ENCODE measurements at regions of chr1 and their contacts with region 1.

Region 1: GRCh38 chr1:23979878-23980724 is at the start of gene SRSF10:
- DNase-seq: peak; percentile 95

Region 2: GRCh38 chr1:23867953-23868556 is 112.0 kb before region 1 on chr1 and contains the start of gene FUCA1:
- CTCF ChIA-PET with region 1: no interaction called
- POLR2A ChIA-PET with region 1: no interaction called
- DNase-seq: peak; percentile 97

Region 3: GRCh38 chr1:23959041-23959460 is 21.1 kb before region 1 on chr1:
- CTCF ChIA-PET with region 1: no interaction called
- POLR2A ChIA-PET with region 1: interaction called, 14 read pairs
- DNase-seq: peak; percentile 76

Region 4: DNA sequence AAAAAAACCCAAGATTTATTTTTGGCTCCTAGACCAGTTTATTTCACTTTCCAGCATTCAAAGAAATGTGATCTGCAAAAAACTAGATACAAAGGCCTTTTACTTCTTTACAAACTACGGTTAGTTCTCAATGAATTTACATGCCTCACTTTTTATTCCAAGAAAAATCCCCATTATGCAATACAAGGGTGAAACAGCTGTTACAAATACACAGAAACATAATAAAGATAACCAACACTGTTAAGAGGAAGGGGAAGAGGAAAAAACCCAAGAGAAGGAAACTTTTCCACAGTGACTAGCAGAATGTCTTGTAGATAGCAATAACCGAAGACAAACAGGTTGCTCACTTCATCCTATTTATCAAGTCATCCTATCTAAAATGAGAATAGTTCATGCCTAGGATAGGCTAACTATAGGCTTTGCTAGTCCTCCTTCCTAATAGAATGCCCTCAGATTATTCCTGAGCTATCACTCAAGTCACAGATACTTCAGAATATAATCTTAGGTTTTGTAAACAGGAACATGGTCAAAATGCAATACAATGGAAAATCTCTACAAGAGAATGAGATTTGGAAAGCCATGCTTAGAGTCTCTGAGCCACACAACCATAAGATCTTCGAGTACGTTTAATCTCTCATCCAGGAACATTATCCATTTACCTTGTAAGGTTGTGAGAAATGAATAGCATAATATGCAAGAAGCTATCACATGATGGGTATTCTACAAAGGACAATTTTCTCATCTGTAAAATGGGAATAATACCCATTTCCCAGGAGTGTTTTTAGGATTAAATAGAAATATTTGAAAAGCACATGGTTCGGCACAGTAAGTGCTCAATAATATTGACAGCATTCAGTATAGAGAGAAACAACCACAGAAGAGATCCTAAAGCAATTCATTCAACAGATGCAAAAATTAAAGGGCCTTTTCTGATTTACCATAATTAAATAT is 15.0 kb before region 1 on chr1:
- CTCF ChIA-PET with region 1: no interaction called
- POLR2A ChIA-PET with region 1: interaction called, 14 read pairs
- DNase-seq: no peak

Region 5: DNA sequence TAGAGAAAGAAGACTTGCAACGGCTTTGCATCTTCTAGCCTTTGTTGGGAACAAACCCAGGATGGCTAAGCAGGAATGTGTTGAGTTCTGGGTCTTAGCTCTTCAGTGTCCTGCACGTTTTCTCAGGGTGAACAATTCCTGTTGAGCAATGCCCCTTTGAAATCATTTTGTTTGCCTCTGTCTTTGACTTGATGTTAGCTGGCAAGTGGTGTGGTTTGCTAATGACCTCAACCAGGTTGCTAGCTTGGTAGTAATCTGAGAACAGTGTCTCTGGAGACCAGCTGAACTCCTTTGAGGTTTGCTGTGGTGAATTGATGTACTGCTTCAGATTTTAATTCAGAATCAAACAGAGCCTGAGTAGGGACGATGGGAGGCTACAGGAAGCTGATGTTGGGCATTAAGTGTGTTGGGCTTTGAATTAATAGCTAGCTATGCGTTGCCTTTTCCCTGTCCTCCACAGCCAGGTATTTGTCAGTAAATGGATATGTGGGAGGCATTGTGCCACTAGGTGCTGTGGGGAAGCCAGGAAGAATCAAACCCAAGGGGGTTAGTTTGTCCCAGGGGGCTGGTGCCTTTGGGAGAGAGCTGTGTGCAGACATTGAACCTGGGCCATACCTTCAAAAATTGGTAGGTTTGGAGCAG is 23.4 kb after region 1 on chr1:
- CTCF ChIA-PET with region 1: interaction called, 3 read pairs
- POLR2A ChIA-PET with region 1: interaction called, 22 read pairs
- DNase-seq: no peak

Region 6: DNA sequence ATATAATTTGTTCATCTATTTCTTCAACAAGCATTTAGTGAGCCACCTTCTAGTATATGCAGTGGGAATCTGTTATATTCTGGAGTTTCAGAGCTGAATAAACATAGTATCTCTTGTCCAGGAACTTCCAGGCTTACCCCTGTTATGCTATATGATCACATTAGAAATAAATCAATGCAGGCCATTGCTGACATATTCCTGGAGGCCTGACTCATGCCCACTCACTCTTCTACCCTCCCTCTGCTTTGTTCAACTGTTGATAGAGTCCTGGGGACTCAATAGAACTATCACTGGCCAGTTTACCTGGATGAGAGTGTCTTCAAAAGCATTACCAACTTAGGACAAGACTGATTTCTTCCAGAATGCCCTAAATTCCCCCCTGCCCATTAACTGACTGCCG is 29.3 kb after region 1 on chr1:
- CTCF ChIA-PET with region 1: interaction called, 3 read pairs
- POLR2A ChIA-PET with region 1: interaction called, 22 read pairs
- DNase-seq: no peak

Region 7: DNA sequence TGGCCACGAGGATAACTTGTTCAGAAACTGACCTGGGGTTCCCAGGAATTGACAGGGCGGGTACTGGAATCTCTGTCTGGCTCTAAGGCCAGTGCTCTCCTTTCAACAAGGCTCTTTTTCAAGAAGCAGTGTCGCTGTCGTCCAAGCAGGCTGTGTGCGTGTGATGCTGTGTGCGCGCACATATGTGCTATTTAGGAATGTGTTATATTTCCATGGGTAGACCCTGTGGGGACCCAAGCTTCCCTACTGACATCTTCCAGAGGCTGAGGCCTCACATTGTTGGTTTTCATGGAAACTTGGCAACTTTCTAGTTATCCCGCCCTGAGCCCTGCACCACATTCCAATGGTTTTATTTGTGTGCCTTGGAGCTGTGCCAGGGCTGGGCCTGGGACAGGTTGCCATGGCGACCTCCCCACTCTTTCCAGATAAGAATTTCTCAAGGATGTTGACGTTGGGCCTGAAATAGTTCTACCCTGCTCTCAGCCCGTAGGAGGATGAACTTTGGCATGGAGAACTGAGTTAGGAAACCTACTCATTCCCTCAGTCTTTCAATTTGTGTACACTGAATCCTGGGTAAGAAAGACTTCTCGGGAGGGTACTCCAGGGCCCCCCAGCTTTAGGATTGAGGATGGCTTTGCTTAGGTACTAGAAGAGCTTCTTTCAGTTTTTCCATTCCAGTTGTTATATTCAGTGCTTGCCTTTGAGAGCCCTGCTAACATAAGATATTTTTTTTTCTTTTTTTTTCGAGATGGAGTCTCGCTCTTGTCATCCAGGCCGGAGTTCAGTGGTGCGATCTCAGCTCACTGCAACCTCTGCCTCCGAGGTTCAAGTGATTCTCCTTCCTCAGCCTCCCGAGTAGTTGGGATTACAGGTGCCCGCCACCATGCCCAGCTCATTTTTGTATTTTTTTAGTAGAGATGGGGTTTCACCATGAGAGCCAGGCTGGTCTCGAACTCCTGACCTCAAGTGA is 38.8 kb after region 1 on chr1:
- CTCF ChIA-PET with region 1: no interaction called
- POLR2A ChIA-PET with region 1: interaction called, 23 read pairs
- DNase-seq: peak; percentile 88

Region 8: DNA sequence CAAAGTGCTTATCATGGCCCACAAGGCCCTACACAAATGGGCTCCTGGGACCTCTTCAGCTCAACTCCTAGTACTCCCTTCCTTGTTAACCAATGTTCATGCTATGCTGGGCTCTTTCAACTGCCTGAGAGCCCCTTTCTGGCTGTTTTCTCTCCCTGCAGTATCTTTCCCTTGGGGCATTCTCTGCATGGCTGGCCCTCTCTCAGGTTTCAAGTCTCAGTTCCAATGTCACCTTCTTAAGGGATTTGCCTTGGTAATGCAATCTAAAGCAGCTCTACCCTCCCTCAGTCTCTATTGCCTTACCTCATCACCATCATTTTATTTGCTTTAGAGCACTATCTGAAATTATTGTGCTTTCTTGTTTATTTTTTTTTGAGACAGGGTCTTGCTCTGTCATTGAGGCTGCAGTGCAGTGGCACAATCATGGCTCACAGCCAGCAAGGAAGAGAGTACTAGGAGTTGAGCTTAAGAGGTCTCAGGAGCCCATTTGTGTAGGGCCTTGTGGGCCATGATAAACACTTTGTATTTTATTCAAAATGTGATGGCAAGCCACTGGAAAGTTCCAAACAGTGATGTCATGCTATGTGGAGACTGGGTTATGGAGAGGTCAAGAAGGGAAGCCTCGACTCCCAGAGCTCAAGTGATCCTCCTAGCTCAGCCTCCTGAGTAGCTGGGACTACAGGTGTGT is 63.4 kb after region 1 on chr1:
- CTCF ChIA-PET with region 1: no interaction called
- POLR2A ChIA-PET with region 1: interaction called, 12 read pairs
- DNase-seq: peak; percentile 37